AG04449 (cell line): ENCODE measurements at regions of chr2 and their contacts with region 1.

Region 1: DNA sequence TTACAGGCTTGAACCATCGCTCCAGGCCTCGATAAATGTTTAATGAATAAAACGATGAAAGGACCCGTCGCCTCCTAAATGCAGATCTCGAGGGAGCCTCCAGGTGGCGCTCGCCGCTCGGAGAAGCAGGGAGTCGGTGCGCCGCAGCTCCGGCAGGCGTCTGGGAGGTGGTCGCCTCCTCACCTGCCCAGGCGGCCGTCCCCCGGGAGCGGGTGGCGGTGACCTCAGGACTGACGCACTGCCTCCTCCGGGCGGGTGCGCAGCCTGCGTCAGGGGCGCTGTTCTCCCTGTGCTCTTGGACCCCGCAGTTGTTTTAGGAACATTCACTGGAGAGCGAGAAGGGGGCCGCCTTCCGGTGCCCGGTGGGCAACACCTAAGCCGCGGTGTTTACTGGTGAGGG is 38.6 kb upstream of the POLE4 start:
- DNase-seq: no peak
- H3K4me3 ChIP-seq: peak overlapping the region; percentile 57
- CTCF ChIP-seq: peak; percentile 86

Region 2: GRCh38 chr2:74632209-74632938 is 287.5 kb before region 1 on chr2:
- CTCF ChIA-PET with region 1: no interaction called
- POLR2A ChIA-PET with region 1: no interaction called
- DNase-seq: no peak
- H3K4me3 ChIP-seq: no peak overlapping the region
- CTCF ChIP-seq: peak; percentile 1

Region 3: DNA sequence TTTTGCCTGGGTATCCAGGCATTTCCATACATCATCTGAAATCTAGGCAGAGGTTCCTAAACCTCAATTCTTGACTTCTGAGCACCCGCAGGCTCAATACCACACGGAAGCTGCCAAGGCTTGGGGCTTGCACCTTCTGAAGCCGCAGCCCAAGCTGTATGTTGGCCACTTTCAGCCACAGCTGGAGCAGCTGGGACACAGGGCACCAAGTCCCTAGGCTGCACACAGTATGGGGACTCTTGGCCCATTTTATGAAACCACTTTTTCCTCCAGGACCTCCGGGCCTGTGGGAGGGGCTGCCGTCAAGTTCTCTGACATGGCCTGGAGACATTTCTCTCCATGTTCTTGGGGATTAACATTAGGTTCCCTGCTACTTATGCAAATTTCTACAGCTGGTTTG is 13.4 kb before region 1 on chr2:
- CTCF ChIA-PET with region 1: interaction called, 12 read pairs
- POLR2A ChIA-PET with region 1: no interaction called
- DNase-seq: no peak
- H3K4me3 ChIP-seq: no peak overlapping the region
- CTCF ChIP-seq: no peak

Region 4: DNA sequence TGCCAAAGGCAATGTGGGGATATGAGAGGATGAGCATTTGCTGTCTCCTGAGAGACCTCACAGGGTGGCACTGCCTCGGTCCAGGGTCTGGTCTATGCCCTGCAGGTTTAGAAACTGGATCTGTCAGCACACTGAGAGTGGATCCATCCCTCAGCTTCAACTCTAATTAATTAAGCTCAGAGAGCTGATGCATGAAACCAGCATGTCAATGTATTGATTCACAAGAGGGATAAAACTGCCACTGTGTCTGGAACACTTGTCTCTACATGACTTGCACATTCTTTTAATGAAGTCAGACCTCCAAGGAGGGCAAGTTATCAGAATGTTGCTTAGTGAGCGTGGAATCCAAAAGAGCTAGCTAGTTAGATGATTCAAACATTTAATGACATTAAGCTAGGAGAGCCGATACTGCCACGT is 16.2 kb after region 1 on chr2:
- CTCF ChIA-PET with region 1: interaction called, 20 read pairs
- POLR2A ChIA-PET with region 1: no interaction called
- DNase-seq: no peak
- H3K4me3 ChIP-seq: no peak overlapping the region
- CTCF ChIP-seq: no peak